Panc1 (cell line): ENCODE measurements at regions of chr4 and their contacts with region 1.

Region 1: DNA sequence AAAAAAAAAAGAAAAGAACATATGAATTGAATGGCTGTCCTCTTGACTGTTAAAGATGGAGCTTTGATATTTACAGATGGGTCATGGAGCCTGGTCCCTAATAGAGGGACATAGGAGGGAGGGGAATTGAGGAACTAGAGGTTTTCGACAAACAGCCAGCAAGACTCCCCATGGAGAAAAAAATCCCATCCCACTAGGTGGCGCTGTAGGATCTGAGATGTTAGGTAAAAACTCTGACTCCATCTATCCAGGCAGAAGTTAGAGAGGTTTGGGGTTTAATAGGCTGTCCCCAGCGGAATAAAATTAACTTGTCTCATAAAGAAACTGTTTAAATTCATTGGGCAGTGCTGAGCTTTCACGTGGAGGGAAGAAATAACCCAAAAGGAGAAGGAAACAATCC is 45.9 kb downstream of the HMGB2 start:
- DNase-seq: peak; percentile 15
- ATAC-seq: peak; percentile 73
- H3K4me3 ChIP-seq: no peak overlapping the region
- H3K27ac ChIP-seq: peak overlapping the region; percentile 55; the same call in 1 of the 2 replicates
- H3K4me1 ChIP-seq: peaks cover 18% of the 10 kb centered on the region
- H3K27me3 ChIP-seq: no peaks in the 10 kb centered on the region
- CTCF ChIP-seq: peak; percentile 66

Region 2: GRCh38 chr4:172962564-172963353 is 325.5 kb before region 1 on chr4:
- CTCF ChIA-PET with region 1: no interaction called
- POLR2A ChIA-PET with region 1: no interaction called
- in situ Hi-C with region 1: no loop called
- intact Hi-C with region 1: no loop called
- DNase-seq: peak; percentile 15
- ATAC-seq: peak; percentile 68; the same call in 1 of the 2 replicates
- H3K4me3 ChIP-seq: no peak overlapping the region
- H3K27ac ChIP-seq: no peak overlapping the region
- H3K4me1 ChIP-seq: no peaks in the 10 kb centered on the region
- H3K27me3 ChIP-seq: no peaks in the 10 kb centered on the region; the same call in 1 of the 2 replicates
- CTCF ChIP-seq: no peak

Region 3: GRCh38 chr4:173267711-173268110 is 20.6 kb before region 1 on chr4:
- CTCF ChIA-PET with region 1: interaction called, 14 read pairs
- POLR2A ChIA-PET with region 1: no interaction called
- in situ Hi-C with region 1: no loop called
- intact Hi-C with region 1: no loop called
- DNase-seq: no peak
- ATAC-seq: no peak
- H3K4me3 ChIP-seq: no peak overlapping the region
- H3K27ac ChIP-seq: peak overlapping the region; percentile 59; the same call in 1 of the 2 replicates
- H3K4me1 ChIP-seq: peaks cover 40% of the 10 kb centered on the region
- H3K27me3 ChIP-seq: no peaks in the 10 kb centered on the region
- CTCF ChIP-seq: no peak

Region 4: GRCh38 chr4:173538148-173538908 is 250.0 kb after region 1 on chr4:
- CTCF ChIA-PET with region 1: no interaction called
- POLR2A ChIA-PET with region 1: no interaction called
- in situ Hi-C with region 1: no loop called
- intact Hi-C with region 1: no loop called
- DNase-seq: no peak
- ATAC-seq: peak; percentile 38
- H3K4me3 ChIP-seq: peak overlapping the region; percentile 26 to 43
- H3K27ac ChIP-seq: no peak overlapping the region
- H3K4me1 ChIP-seq: no peaks in the 10 kb centered on the region
- H3K27me3 ChIP-seq: peaks cover 23% of the 10 kb centered on the region
- CTCF ChIP-seq: no peak